AG04450 (cell line): ENCODE measurements at regions of chr3 and their contacts with region 1.

Region 1: DNA sequence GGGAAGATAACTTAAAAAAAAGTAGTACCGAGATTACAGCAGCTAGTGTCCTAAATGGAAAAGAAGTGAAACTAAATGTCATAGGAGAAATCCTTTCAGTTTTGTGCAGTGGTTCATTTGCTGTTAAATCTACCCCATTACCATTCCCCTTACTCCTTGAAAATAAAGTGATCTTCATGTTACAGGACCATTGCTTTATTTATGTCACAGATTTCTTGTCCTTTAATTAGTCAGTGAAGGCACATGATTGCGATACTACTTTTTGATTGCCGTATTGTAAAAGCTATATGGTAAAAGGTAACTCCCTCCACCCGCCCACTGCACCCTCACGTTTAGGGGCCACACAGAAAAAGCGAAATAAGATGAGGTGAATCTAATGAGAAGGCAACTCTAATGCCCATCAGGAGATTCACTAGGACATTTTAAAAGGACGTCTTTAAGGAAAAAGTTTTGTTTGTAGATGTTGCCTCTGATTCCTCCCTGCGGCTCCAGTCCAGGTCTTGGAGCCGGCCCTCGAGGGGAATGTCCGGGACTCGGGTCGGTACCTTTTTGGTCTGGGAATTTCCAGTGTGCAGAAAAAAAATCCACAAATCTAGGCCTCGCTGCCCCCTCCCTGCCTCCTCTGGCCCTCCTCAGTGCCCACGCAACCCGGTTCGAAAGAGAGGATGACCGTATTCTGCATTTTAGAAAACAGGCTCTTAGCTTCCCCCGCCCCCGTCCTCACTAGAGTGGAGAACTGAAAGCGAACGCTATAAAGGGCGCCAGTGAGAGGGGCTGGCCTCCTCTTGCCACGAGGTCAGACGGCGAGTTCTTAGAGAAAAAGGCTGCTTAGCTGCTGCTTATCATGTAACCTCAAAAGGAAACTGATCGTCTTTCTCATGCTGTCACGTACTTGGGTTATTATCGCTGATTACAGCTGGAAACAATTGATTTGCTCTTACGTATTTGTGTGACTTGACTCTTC is 21.8 kb upstream of the NFKBIZ start:
- DNase-seq: no peak
- H3K4me3 ChIP-seq: peak overlapping the region; percentile 67
- H3K27ac ChIP-seq: peak overlapping the region; percentile 93
- H3K27me3 ChIP-seq: no peaks in the 10 kb centered on the region
- CTCF ChIP-seq: no peak

Region 2: DNA sequence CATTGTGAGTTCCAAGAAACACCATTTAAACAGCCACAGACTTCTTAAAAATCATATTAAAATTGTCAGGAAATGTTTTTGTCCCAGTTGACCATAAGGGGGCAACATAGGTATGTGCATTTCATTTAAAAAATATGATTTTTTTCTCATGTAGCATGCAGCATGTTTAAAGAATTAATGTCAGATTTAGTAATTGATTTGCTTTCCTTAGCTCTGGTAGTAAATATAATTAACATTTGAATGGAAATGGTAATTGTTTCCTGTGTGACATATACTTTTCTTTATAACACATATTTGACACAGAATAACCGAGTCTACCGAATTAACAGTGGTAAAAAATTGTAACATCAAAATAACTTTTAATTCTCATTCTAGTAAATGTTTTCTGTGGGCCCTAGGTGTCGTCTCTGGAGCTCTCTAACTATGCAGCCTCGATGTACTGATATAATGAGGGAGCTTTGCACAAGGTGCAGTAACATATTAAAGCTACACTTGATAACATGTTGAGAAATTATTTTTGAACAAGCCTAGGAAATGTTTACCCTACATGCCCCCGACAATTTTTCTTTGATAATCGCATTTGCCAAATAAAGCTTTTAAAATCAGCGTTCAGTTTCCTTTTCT is 13.6 kb before region 1 on chr3:
- CTCF ChIA-PET with region 1: interaction called, 14 read pairs
- POLR2A ChIA-PET with region 1: interaction called, 3 read pairs
- DNase-seq: no peak
- H3K4me3 ChIP-seq: no peak overlapping the region
- H3K27ac ChIP-seq: no peak overlapping the region
- H3K27me3 ChIP-seq: no peaks in the 10 kb centered on the region
- CTCF ChIP-seq: peak; percentile 53

Region 3: GRCh38 chr3:102124301-102125158 is 297.0 kb after region 1 on chr3:
- CTCF ChIA-PET with region 1: no interaction called
- POLR2A ChIA-PET with region 1: no interaction called
- DNase-seq: no peak
- H3K4me3 ChIP-seq: no peak overlapping the region
- H3K27ac ChIP-seq: no peak overlapping the region
- H3K27me3 ChIP-seq: no peaks in the 10 kb centered on the region
- CTCF ChIP-seq: no peak